ENCODE measurements at regions of chr17 and their contacts with region 1.

Region 1: DNA sequence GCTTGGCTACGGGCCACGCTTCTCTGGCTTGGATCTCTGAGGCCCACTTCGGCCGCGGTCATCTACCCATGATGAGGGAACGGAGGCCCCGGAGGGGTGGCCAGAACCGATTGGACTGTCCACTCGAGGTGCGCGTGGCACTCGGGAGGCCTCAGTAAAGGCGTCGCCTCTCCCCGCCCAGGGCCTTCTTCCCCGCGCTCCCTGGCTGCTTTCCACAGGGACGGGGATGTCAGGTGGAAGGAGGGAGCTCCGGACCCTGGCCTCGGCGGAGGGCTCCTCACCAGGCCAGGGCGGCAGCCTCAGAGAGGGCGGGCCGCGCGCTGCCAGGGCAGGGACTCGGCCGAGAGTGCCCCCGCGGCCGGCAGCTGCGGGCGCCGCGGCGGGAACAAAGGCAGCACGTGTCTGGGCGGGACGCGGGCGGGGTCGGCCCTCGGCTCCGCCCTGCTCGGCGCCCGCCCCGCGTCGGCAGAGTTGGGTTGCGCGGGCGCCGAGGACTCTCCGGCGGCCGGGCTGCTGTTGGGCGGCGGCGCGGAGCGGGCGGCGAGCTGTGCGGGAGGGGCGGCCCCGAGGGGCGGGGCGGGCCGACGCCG is 587 bp upstream of the CDK5R1 start:
- DNase-seq: peak; percentile 87
- ATAC-seq: peak; percentile 76
- H3K4me3 ChIP-seq: peak overlapping the region in 4 of 5 experiments; percentile 19 to 64 (median 54)
- H3K4me3 Mint-ChIP-seq: peak overlapping the region; percentile 78
- H3K27ac ChIP-seq: peak overlapping the region in 1 of 2 donors; percentile 69
- H3K27ac Mint-ChIP-seq: peak overlapping the region; percentile 73
- H3K4me1 ChIP-seq: peaks cover 47% of the 10 kb centered on the region in 2 donors
- H3K4me1 Mint-ChIP-seq: peaks cover 50% of the 10 kb centered on the region
- H3K27me3 ChIP-seq: no peaks in the 10 kb centered on the region
- H3K27me3 Mint-ChIP-seq: no peaks in the 10 kb centered on the region
- CTCF ChIP-seq: no peak

Region 2: DNA sequence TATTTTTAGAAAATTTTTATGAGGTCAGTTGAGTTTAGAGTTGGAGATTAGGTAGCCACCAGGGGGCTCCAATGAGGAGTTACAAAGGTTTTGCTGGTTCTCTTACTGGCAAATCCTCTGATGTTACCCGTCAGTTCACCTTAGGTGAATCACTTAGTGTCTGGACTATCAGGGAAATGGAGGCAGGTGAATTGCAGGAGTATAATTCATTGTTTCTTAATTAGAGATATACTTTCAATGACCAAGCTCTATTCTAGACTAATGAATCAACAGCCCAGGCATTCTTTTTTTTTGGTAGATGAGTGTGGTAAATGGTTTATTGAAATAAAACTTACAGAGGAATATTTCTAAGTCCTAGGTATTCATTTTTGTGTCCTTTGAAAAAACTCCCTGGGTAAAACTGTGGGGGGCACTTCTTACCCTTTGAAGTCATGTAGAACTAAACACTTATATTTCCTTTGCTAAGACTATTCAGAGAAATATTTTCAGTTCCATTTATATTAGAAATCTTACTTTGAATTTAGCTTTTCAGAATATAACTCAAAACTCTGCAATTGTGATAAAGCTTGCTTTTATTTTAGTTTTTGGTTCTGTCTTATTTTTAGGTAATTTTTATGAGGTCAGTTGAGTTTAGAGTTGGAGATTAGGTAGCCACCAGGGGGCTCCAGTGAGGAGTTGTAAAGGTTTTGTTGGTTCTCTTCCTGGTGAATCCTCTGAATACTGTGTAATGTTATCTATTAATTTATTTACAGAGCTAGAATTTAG is 24.2 kb before region 1 on chr17:
- CTCF ChIA-PET with region 1: interaction called, 65 read pairs
- POLR2A ChIA-PET with region 1: no interaction called
- intact Hi-C with region 1: no loop called
- DNase-seq: peak; percentile 73
- ATAC-seq: peak; percentile 80
- H3K4me3 ChIP-seq: no peak overlapping the region
- H3K4me3 Mint-ChIP-seq: no peak overlapping the region
- H3K27ac ChIP-seq: peak overlapping the region in 1 of 2 donors; percentile 25
- H3K27ac Mint-ChIP-seq: no peak overlapping the region
- H3K4me1 ChIP-seq: peaks cover 0 to 3% of the 10 kb centered on the region in 2 donors
- H3K4me1 Mint-ChIP-seq: peaks cover 7% of the 10 kb centered on the region
- H3K27me3 ChIP-seq: no peaks in the 10 kb centered on the region
- H3K27me3 Mint-ChIP-seq: no peaks in the 10 kb centered on the region
- CTCF ChIP-seq: peak; percentile 72

Region 3: GRCh38 chr17:32503251-32504165 is 17.3 kb after region 1 on chr17:
- CTCF ChIA-PET with region 1: interaction called, 4 read pairs
- POLR2A ChIA-PET with region 1: interaction called, 3 read pairs
- intact Hi-C with region 1: loop called (anchors 1 kb)
- DNase-seq: peak; percentile 89
- ATAC-seq: peak; percentile 92
- H3K4me3 ChIP-seq: peak overlapping the region in 3 of 5 experiments; percentile 0 to 17 (median 15)
- H3K4me3 Mint-ChIP-seq: peak overlapping the region; percentile 81
- H3K27ac ChIP-seq: peak overlapping the region; percentile 95
- H3K27ac Mint-ChIP-seq: peak overlapping the region; percentile 98
- H3K4me1 ChIP-seq: peaks cover 50% of the 10 kb centered on the region in 2 donors
- H3K4me1 Mint-ChIP-seq: peaks cover 50% of the 10 kb centered on the region
- H3K27me3 ChIP-seq: no peaks in the 10 kb centered on the region
- H3K27me3 Mint-ChIP-seq: no peaks in the 10 kb centered on the region
- CTCF ChIP-seq: no peak

Region 4: DNA sequence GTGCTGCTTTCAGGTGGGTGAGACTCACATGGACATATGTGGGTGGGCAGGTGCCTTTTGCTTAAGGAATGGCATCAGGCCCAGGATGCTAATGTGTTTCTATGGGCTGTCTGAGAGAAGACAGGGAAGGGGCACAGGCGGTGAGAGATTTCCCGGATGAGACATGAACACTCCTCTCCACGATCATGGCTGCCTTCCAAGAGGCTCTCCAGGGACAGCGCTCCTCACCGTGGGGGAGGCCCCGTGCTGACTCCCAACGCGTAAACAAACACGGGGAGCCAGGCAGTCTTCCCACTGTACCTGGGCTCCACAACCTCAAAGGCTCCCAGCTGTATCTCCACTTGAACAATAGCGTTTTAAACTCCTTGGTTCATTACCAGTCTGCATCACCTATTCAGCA is 43.4 kb after region 1 on chr17:
- CTCF ChIA-PET with region 1: interaction called, 74 read pairs
- POLR2A ChIA-PET with region 1: interaction called, 13 read pairs
- intact Hi-C with region 1: no loop called
- DNase-seq: no peak
- ATAC-seq: no peak
- H3K4me3 ChIP-seq: no peak overlapping the region
- H3K4me3 Mint-ChIP-seq: no peak overlapping the region
- H3K27ac ChIP-seq: no peak overlapping the region
- H3K27ac Mint-ChIP-seq: no peak overlapping the region
- H3K4me1 ChIP-seq: peaks cover 16 to 31% of the 10 kb centered on the region in 2 donors
- H3K4me1 Mint-ChIP-seq: peaks cover 34% of the 10 kb centered on the region
- H3K27me3 ChIP-seq: no peaks in the 10 kb centered on the region
- H3K27me3 Mint-ChIP-seq: no peaks in the 10 kb centered on the region
- CTCF ChIP-seq: no peak

Region 5: DNA sequence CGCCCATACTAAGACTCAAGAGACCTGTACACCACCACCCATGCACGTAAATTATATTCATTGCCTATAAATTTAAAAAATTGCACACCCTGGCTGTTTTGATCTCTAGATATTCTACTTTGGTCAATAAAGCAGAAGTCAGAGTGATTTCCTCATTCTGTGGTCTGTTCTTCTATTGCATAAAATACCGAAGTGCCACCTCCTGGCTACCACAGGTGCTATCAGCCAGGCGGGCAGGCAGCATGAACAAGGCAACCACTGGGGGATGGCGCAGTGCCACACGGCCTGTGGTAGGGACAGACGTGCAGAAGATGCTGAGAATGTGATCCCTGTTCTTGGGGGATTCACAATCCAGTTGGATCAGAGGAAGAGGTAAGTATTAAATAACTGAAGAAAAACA is 122.9 kb after region 1 on chr17:
- CTCF ChIA-PET with region 1: interaction called, 139 read pairs
- POLR2A ChIA-PET with region 1: interaction called, 3 read pairs
- intact Hi-C with region 1: loop called (anchors 1 kb)
- DNase-seq: peak; percentile 85
- ATAC-seq: peak; percentile 100
- H3K4me3 ChIP-seq: no peak overlapping the region
- H3K4me3 Mint-ChIP-seq: no peak overlapping the region
- H3K27ac ChIP-seq: no peak overlapping the region
- H3K27ac Mint-ChIP-seq: no peak overlapping the region
- H3K4me1 ChIP-seq: peaks cover 6 to 8% of the 10 kb centered on the region in 2 donors
- H3K4me1 Mint-ChIP-seq: peaks cover 9% of the 10 kb centered on the region
- H3K27me3 ChIP-seq: no peaks in the 10 kb centered on the region
- H3K27me3 Mint-ChIP-seq: no peaks in the 10 kb centered on the region
- CTCF ChIP-seq: peak; percentile 82

Region 6: DNA sequence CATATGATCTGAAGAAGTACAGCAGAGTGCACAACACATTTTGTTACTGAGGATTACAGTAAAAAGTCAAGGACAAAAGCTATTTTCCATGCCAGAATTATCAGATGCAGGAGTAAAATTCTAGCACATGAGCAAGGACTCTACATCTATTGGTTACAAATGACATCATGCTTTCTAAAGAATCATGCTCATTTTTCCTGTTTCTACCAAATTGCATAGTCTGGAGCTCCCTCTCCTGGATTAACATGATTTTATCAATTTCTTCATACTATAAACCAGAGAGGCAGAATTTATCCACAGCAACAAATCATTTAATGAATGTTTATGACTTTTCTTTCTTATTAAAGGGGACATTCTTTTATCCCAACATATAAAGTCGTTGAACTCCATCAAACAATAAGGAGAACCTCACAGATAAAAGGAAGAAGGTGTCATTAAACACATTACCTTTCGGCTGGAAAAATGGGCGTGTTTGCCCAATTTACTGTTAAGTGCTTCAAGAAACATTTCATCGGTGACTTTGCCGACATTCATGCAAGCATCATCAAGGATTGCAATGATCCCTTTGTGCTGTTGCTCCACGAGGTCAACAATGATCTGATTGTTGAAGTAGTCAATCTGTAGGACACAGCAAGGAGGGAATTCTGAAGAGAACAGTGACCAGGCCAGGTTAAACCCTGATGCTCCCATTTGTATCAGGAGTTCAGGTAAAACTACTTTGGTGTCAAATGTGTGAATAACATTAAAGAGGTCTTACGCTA is 269.0 kb after region 1 on chr17:
- CTCF ChIA-PET with region 1: interaction called, 6 read pairs
- POLR2A ChIA-PET with region 1: no interaction called
- intact Hi-C with region 1: loop called (anchors 1 kb)
- DNase-seq: peak; percentile 62
- ATAC-seq: peak; percentile 41
- H3K4me3 ChIP-seq: no peak overlapping the region
- H3K4me3 Mint-ChIP-seq: no peak overlapping the region
- H3K27ac ChIP-seq: no peak overlapping the region
- H3K27ac Mint-ChIP-seq: no peak overlapping the region
- H3K4me1 ChIP-seq: no peaks in the 10 kb centered on the region
- H3K4me1 Mint-ChIP-seq: no peaks in the 10 kb centered on the region
- H3K27me3 ChIP-seq: no peaks in the 10 kb centered on the region
- H3K27me3 Mint-ChIP-seq: no peaks in the 10 kb centered on the region
- CTCF ChIP-seq: peak; percentile 64

Measured in B cell (primary cell).